H1 (cell line): ENCODE measurements at regions of chr17 and their contacts with region 1.

Region 1: GRCh38 chr17:51640108-51640622 is 379.8 kb downstream of the UTP18 start:
- DNase-seq: peak in 1 of 2 experiments; percentile 65
- H3K4me3 ChIP-seq: no peak overlapping the region
- H3K27ac ChIP-seq: no peak overlapping the region
- H3K4me1 ChIP-seq: peaks cover 0 to 3% (median 1%) of the 10 kb centered on the region in 4 experiments; a peak in 2 of 7 replicates
- H3K27me3 ChIP-seq: no peaks in the 10 kb centered on the region
- CTCF ChIP-seq: peak; percentile 36 to 85 (median 75)
- EP300 ChIP-seq: no peak
- POLR2A ChIP-seq: no peak
- RAD21 ChIP-seq: peak; percentile 63 to 73

Region 2: DNA sequence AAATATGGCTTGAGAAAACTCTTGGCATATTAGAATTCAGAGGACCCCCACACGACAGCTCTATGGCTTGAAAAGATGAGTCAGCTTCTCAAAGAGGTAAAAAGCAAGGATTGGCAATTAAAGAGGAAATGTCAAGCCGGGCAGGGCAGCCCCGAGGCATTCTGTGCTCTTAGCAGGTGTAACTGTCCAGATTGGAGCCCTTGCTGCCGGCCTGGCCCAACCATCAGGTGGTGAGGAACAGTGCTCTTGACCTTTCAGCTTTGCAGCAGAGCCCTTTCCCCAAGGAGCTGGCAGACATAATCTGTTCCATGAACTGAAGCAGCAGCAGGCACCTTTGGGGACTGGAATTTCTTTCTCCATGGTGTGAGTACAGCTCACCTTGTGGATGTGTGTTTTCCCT is 92.0 kb before region 1 on chr17:
- CTCF ChIA-PET with region 1: no interaction called
- POLR2A ChIA-PET with region 1: no interaction called
- DNase-seq: no peak
- H3K4me3 ChIP-seq: no peak overlapping the region
- H3K27ac ChIP-seq: no peak overlapping the region
- H3K4me1 ChIP-seq: no peaks in the 10 kb centered on the region
- H3K27me3 ChIP-seq: no peaks in the 10 kb centered on the region
- CTCF ChIP-seq: no peak
- EP300 ChIP-seq: no peak
- POLR2A ChIP-seq: no peak
- RAD21 ChIP-seq: no peak

Region 3: GRCh38 chr17:51653878-51654277 is 13.7 kb after region 1 on chr17:
- CTCF ChIA-PET with region 1: interaction called, 32 read pairs
- POLR2A ChIA-PET with region 1: no interaction called
- DNase-seq: no peak
- H3K4me3 ChIP-seq: no peak overlapping the region
- H3K27ac ChIP-seq: no peak overlapping the region
- H3K4me1 ChIP-seq: no peaks in the 10 kb centered on the region
- H3K27me3 ChIP-seq: no peaks in the 10 kb centered on the region
- CTCF ChIP-seq: peak; percentile 17 to 45 (median 26)
- EP300 ChIP-seq: no peak
- POLR2A ChIP-seq: no peak
- RAD21 ChIP-seq: peak; percentile 21 to 32; a peak in 3 of 4 replicates